ENCODE measurements at regions of chr19 and their contacts with region 1.

Region 1: DNA sequence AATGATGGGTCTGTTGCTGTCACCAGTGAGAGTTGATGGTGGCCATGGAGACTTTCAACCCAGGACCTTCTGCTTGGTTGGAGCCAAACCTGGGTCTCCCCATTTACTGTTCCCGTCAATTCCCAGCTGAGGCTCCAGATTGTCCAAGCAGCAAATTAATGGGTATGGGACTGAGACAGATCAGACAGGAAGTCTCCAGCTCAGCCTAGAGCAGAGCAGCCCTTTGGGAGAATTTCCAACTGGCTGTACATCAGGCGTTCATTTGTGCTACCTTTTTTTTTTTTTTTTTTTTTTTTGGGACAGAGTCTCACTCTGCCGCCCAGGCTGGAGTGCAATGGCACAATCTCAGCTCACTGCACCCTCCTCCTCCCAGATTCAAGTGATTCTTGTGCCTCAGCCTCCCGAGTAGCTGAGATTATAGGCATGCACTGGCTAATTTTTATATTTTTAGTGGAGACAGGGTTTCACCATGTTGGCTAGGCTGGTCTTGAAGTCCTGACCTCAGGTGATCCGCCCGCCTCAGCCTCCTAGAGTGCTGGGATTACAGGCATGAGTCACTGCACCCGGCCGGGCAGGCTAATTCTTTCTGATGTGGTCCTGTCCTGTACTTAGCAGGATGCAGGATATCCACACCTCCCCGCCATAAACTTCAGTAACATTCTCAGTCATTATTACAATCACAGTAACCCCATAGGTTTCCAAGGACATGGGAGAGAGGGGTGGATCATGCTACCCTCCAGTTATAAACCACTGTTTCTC is 9.3 kb downstream of the MAP3K10 start:
- DNase-seq: no peak
- H3K4me3 ChIP-seq: no peak overlapping the region
- H3K27ac ChIP-seq: no peak overlapping the region
- H3K4me1 ChIP-seq: no peaks in the 10 kb centered on the region
- H3K27me3 ChIP-seq: no peaks in the 10 kb centered on the region
- CTCF ChIP-seq: no peak

Region 2: DNA sequence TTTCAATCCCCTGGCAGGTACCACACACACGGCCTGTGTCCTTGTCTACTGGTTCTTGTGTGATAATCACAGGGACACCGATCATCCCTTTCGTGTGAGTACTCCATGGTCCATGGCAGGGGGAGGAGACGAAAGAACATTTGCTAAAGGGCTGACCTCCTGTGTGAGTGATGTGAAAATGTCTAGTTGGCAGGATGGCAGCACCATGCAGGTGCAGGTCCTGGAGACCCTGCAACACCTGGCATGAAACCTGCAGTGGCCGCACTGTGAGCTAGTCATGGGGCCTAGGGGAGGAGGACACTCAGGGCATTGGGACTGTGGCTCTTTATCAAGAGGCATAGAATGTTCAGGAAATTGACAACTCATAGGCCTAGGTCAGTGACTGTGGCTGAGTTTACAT is 519.1 kb before region 1 on chr19:
- CTCF ChIA-PET with region 1: no interaction called
- POLR2A ChIA-PET with region 1: interaction called, 12 read pairs
- intact Hi-C with region 1: no loop called
- DNase-seq: no peak
- H3K4me3 ChIP-seq: no peak overlapping the region
- H3K27ac ChIP-seq: no peak overlapping the region
- H3K4me1 ChIP-seq: no peaks in the 10 kb centered on the region
- H3K27me3 ChIP-seq: peaks cover 30% of the 10 kb centered on the region
- CTCF ChIP-seq: no peak

Region 3: DNA sequence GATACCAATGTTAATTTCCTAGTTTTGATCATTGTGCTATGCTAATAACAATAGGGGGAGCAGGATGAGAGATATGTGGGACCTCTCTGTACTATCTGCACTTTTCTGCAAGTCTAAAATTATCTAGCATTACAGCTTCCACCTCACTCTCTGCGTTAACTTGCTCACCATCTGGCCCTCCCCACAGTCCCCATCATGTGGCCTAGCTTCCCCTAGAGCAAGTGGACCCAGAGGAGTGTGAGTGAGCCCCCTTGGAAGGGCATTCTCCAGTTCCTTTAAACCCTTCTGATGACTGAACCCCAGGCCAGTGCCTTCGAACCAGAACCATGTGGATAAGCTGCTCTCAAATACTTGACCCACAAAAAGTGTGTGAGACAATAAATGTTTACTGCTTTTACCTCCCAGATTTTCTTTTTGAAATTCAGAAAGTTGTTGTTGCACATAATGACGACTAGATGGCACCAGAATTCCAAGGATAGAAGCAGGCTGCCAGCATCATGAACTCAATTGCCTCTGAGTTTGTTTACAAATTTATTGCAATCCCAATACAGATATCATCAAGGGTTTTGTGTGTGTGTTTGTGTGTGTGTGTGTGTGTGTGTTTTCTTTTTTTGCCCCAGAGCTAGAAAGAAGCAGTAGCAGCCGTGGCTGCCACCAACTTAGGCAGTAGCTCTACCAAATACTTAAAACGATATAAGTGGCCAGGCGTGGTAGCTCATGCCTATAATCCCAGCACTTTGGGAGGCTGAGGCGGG is 60.8 kb before region 1 on chr19:
- CTCF ChIA-PET with region 1: interaction called, 4 read pairs
- POLR2A ChIA-PET with region 1: interaction called, 21 read pairs
- intact Hi-C with region 1: no loop called
- DNase-seq: peak; percentile 73
- H3K4me3 ChIP-seq: no peak overlapping the region
- H3K27ac ChIP-seq: no peak overlapping the region
- H3K4me1 ChIP-seq: peaks cover 24% of the 10 kb centered on the region
- H3K27me3 ChIP-seq: no peaks in the 10 kb centered on the region
- CTCF ChIP-seq: peak; percentile 80

Region 4: GRCh38 chr19:40147693-40148347 is 52.7 kb before region 1 on chr19:
- CTCF ChIA-PET with region 1: interaction called, 4 read pairs
- POLR2A ChIA-PET with region 1: interaction called, 21 read pairs
- intact Hi-C with region 1: no loop called
- DNase-seq: peak; percentile 95
- H3K4me3 ChIP-seq: peak overlapping the region; percentile 55
- H3K27ac ChIP-seq: peak overlapping the region; percentile 92
- H3K4me1 ChIP-seq: peaks cover 38% of the 10 kb centered on the region
- H3K27me3 ChIP-seq: no peaks in the 10 kb centered on the region
- CTCF ChIP-seq: 0 out of 2 replicates have a peak, but pooled peaks have one; percentile 19

Region 5: DNA sequence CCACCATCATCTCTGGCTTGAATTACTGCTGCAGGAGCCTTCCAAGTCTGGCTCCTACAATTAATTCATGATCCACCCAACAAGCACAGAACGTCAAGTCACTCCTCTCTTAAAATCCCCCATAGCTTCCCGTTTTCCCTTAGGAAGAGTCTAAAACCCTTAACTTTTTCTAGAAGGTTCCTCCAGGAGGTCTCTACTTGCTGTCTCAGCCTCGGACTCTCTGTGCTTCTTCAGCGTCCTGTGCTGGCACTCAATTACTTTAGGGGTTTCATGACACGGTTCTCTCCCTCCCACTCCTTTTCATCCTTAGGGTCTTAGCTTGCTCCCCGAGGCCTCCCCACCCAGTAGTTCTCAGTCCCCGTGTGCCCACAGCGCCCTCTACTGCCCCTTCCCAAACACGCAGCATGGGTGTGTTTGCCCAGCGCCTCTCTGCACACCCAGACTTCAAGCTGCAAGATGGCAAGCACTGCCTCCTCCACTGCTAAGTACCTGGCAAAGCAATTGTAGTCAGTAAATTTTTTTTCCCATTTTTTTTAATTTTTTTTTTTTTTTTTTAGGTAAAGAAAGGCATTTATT is 35.1 kb before region 1 on chr19:
- CTCF ChIA-PET with region 1: interaction called, 11 read pairs
- POLR2A ChIA-PET with region 1: no interaction called
- intact Hi-C with region 1: no loop called
- DNase-seq: peak; percentile 89
- H3K4me3 ChIP-seq: peak overlapping the region; percentile 20
- H3K27ac ChIP-seq: no peak overlapping the region
- H3K4me1 ChIP-seq: peaks cover 4% of the 10 kb centered on the region
- H3K27me3 ChIP-seq: no peaks in the 10 kb centered on the region
- CTCF ChIP-seq: peak; percentile 96

Region 6: DNA sequence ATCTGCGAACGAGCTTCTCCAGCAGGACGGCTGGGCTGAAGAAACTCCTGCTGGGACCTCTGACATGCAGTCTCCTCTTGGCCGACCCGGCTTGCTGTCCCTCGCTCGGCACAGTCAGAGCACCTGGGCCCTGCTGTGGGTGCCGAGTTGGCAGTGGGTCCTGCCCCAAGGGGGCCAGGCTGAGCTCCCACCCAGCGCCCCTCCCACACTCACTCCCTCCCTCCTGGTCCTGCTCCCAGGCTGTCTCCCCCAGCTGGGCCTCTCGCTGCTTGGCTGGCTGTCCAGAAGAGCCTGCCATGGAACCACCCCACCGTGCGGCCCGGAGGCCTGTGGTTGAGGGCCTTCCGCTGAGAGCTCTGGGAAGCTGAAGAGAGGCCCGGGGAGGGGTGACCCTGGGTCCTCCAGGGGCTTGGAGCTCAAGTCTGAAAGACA is 78.6 kb after region 1 on chr19:
- CTCF ChIA-PET with region 1: no interaction called
- POLR2A ChIA-PET with region 1: interaction called, 12 read pairs
- intact Hi-C with region 1: no loop called
- DNase-seq: no peak
- H3K4me3 ChIP-seq: no peak overlapping the region
- H3K27ac ChIP-seq: peak overlapping the region; percentile 70
- H3K4me1 ChIP-seq: peaks cover 54% of the 10 kb centered on the region
- H3K27me3 ChIP-seq: no peaks in the 10 kb centered on the region
- CTCF ChIP-seq: no peak

Region 7: GRCh38 chr19:40444192-40445028 is 243.9 kb after region 1 on chr19 and contains the start of gene SERTAD3:
- CTCF ChIA-PET with region 1: no interaction called
- POLR2A ChIA-PET with region 1: interaction called, 16 read pairs
- intact Hi-C with region 1: no loop called
- DNase-seq: peak; percentile 98
- H3K4me3 ChIP-seq: peak within 1 kb of the TSS; percentile 82
- H3K27ac ChIP-seq: peak within 1 kb of the TSS; percentile 96
- H3K4me1 ChIP-seq: peaks cover 22% of the 10 kb centered on the region
- H3K27me3 ChIP-seq: no peaks in the 10 kb centered on the region
- CTCF ChIP-seq: peak; percentile 52
- total RNA-seq, gene SERTAD3: 26.3 and 28.7 TPM in 2 replicates

Measured in A673 (cell line).